ENCODE measurements at regions of chr3 and their contacts with region 1.

Region 1: GRCh38 chr3:133426721-133427120 is 26.9 kb downstream of the BFSP2 start:
- DNase-seq: no peak
- H3K4me3 Mint-ChIP-seq: no peak overlapping the region
- H3K27ac Mint-ChIP-seq: no peak overlapping the region
- H3K4me1 Mint-ChIP-seq: peaks cover 10% of the 10 kb centered on the region
- H3K27me3 Mint-ChIP-seq: peaks cover 8% of the 10 kb centered on the region

Region 2: DNA sequence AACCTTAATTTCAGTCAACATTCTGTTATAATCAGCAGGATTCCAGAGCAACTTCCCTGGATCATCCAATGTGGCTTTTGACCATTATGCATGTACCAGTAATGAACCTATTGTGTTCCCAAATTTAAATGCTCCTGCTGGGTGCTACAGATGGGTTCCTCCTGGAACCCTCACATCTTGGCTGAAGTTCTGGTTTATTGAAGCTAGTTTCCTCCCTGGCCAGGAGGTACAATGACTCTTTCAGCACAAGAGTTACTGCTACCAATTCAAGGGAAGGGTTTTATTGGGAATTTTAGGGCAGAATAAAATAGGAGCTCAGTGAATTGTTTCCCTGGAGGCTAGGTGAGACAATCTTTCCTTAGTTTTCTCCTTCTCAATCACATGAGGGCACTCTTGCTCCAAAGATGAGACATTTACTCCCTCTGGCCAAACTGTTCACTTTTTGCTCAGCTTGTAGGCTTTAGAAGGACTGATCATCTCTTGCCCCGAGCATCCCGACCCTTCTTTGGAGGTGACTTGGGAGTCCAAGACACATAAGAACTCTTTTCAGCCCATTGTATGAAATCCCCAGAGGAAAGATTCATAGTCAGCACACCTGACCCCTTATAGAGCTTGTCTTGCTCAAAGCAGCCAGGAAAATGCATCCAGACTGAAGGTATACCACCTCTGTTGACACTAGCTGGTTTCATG is 695.7 kb before region 1 on chr3:
- intact Hi-C with region 1: loop called (anchors 2 kb)
- DNase-seq: no peak
- H3K4me3 Mint-ChIP-seq: no peak overlapping the region
- H3K27ac Mint-ChIP-seq: no peak overlapping the region
- H3K4me1 Mint-ChIP-seq: no peaks in the 10 kb centered on the region
- H3K27me3 Mint-ChIP-seq: peaks cover 37% of the 10 kb centered on the region

Region 3: GRCh38 chr3:133040696-133041523 is 385.8 kb before region 1 on chr3:
- intact Hi-C with region 1: loop called (anchors 1 kb)
- DNase-seq: no peak
- H3K4me3 Mint-ChIP-seq: no peak overlapping the region
- H3K27ac Mint-ChIP-seq: no peak overlapping the region
- H3K4me1 Mint-ChIP-seq: peaks cover 2% of the 10 kb centered on the region
- H3K27me3 Mint-ChIP-seq: peaks cover 37% of the 10 kb centered on the region

Region 4: DNA sequence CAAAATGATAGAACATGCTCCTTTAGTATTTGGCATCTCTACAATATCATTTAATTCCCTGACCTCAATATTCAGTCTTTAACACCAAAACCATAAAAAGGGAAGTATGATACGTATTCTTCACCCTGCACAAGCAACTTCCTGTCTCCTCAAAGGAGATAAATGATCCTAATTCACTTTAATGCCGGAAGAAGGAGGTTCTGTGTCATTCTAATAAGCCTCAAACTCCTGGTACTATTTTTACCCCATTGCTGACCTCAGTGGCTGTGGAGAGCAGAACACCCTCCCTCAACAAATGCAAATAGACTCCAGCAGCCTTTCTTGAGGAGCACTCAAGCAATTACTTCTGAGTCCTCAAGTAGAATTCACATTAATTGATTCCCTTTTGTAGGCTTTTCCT is 215.3 kb before region 1 on chr3:
- intact Hi-C with region 1: loop called (anchors 10 kb)
- DNase-seq: no peak
- H3K4me3 Mint-ChIP-seq: no peak overlapping the region
- H3K27ac Mint-ChIP-seq: no peak overlapping the region
- H3K4me1 Mint-ChIP-seq: peaks cover 20% of the 10 kb centered on the region
- H3K27me3 Mint-ChIP-seq: peaks cover 4% of the 10 kb centered on the region

Region 5: DNA sequence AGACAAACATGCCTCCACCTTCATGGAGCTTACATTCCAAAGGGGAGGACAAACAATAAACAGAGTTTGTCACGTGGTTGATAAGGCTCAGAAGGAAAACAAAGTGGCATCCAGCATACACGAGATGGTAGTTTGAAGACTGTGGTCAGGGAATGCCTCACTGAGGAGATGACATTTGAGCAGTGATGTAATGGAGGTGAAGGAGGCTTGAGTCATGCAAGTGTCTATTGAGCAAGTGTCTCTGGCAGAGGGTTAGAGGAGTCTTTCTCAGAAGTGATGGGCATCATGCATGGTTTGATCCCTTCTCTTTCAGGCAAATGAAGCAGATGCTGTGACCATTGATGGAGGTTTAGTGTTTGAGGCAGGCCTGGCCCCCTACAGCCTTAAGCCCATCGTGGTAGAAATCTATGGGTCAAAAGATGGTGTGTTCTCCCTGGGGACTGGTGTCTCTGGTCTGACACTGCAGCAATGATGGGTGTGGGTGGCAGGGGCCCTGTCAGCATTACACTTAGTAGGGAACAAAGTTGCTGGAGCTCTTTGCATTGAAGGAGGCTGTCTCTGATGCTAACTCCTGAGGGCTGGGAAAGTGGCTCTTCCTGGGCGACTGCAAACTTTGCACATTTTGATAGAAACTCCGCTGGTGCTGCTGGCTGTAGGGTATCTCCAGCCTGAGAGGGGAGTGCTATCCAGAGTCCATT is 264.8 kb after region 1 on chr3:
- intact Hi-C with region 1: no loop called
- DNase-seq: no peak
- H3K4me3 Mint-ChIP-seq: no peak overlapping the region
- H3K27ac Mint-ChIP-seq: no peak overlapping the region
- H3K4me1 Mint-ChIP-seq: peaks cover 8% of the 10 kb centered on the region
- H3K27me3 Mint-ChIP-seq: peaks cover 1% of the 10 kb centered on the region